GM13977 (cell line): ENCODE measurements at regions of chr20 and their contacts with region 1.

Region 1: GRCh38 chr20:49219089-49219923 is at the start of gene DDX27:
- DNase-seq: peak; percentile 96
- CTCF ChIP-seq: no peak

Region 2: DNA sequence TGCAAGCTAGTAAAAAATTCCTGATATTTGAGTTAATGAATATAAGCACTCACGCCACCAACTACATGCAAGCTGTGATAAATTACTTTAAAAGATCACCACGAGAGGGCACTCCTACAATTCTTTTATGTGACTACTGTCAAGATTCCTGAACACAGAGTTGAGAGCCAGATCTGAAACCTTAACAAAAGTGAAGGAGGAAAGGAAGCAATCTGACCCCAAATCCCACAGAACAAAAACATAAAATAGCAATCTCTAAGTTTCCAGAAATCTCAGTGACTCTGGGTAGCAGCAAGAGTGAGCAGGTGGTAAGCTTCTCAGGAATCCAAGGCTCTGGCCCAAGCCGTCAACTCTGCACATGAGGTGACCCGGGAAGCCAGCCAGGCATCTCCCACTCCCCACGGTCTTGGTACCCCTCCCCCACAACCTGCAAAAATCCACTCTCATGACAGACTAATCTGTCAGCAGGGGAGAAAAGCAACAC is 86.3 kb before region 1 on chr20:
- in situ Hi-C with region 1: loop called (anchors 5 kb)
- DNase-seq: peak; percentile 54
- CTCF ChIP-seq: peak; percentile 50